ENCODE measurements at regions of chr7 and their contacts with region 1.

Region 1: DNA sequence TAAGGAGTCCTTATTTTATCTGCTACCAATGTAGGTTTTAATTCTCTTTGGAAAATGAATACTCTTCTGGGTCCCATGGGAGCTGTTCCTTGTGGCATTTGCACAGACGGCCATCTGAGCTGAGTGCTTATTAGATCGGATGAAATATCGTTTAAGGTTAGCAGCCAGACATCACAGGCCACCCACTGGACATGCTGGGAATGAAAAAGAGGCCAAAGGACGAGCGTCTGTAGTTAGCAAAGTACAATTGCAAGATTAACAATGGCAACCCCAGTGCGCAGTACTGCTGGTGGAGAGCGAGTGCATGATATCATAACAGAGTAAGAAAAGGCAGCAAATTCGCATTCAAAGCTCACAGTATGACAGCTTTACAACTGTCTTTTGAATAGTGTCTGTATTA is 28.3 kb upstream of the CREB5 start:
- DNase-seq: no peak
- H3K4me3 Mint-ChIP-seq: no peak overlapping the region
- H3K27ac Mint-ChIP-seq: no peak overlapping the region
- H3K4me1 Mint-ChIP-seq: no peaks in the 10 kb centered on the region
- H3K27me3 Mint-ChIP-seq: no peaks in the 10 kb centered on the region
- CTCF ChIP-seq: no peak

Region 2: GRCh38 chr7:28298870-28299518 is 85.0 kb before region 1 on chr7:
- CTCF ChIA-PET with region 1: no interaction called
- intact Hi-C with region 1: loop called (anchors 1 kb)
- DNase-seq: peak; percentile 74
- H3K4me3 Mint-ChIP-seq: no peak overlapping the region
- H3K27ac Mint-ChIP-seq: no peak overlapping the region
- H3K4me1 Mint-ChIP-seq: no peaks in the 10 kb centered on the region
- H3K27me3 Mint-ChIP-seq: no peaks in the 10 kb centered on the region
- CTCF ChIP-seq: peak; percentile 67

Region 3: GRCh38 chr7:28433699-28434219 is 49.8 kb after region 1 on chr7:
- CTCF ChIA-PET with region 1: no interaction called
- intact Hi-C with region 1: no loop called
- DNase-seq: peak; percentile 42
- H3K4me3 Mint-ChIP-seq: no peak overlapping the region
- H3K27ac Mint-ChIP-seq: no peak overlapping the region
- H3K4me1 Mint-ChIP-seq: peaks cover 36% of the 10 kb centered on the region
- H3K27me3 Mint-ChIP-seq: no peaks in the 10 kb centered on the region
- CTCF ChIP-seq: no peak

Measured in Calu3 (cell line).